Heart left ventricle (tissue), 16 donors: ENCODE measurements at regions of chr7 and their contacts with region 1.

Region 1: DNA sequence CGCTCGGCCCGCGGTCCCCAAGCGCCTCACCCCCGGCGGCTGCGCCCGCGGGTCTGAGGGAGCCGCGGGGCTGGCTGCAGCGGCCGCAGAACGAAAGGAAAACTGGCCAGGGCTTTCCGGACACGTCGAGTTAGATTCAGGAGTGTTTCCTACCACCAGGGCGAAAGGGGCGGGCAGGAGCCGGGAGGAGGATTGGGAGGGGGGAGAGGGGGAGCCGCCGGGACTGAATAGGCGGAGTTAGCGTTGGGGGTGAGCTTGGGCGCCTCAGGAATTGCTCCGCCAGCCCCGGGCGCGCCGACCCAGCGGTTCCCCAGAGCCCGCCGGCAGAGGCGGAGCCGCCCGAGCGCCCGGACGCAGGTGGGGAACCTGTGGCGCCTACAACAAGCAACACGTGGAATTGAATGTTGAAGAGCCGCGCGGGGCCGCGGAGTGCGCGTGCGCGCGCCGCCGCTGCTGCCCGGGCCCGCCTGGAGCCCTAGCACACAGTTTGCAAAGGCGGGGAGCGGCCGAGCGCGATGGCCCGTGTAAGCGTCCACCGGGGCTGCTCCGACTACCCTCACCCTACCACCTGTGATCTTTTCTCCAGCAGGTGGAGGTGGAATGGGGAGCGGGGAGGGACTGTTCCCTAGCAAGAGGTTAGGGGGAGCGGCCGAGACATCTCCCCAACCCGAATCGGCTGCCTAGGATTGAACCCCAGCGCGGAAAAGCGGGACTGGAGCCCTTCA is at the start of gene CADPS2:
- DNase-seq: peak; percentile 87 to 90 (median 88)
- ATAC-seq: peak; percentile 82 to 96 (median 94)
- H3K4me3 ChIP-seq: peak within 1 kb of the TSS; percentile 63 to 91 (median 84)
- H3K27ac ChIP-seq: peak within 1 kb of the TSS; percentile 85 to 95 (median 91)
- H3K4me1 ChIP-seq: peaks cover 0 to 27% (median 6%) of the 10 kb centered on the region in 12 donors
- H3K27me3 ChIP-seq: peaks cover 0 to 33% (median 0%) of the 10 kb centered on the region in 9 donors
- CTCF ChIP-seq: peak in 7 of 12 donors; percentile 6 to 38 (median 33)
- POLR2A ChIP-seq: peak in 1 of 2 donors; percentile 83
- total RNA-seq, gene CADPS2: 6.5 to 29.0 (median 10.3) TPM

Region 2: DNA sequence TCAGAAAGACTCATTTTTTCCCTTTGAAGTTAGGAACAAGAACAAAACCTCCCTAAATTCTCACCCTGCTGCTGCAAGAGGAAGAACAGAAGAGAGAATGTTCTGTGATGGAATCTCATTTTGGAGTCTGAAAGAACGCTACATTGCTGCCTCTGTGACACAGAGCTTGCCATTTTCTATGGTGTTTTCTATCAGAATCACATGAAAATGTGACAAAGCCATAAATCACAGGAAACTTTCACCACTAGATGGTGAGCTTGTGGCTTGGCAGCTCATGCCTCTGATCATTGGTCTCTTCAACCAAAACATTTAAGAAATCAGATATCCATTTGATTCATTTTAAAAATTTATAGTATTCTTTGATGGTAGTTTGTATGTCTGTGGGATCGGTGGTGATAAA is 83.2 kb before region 1 on chr7:
- intact Hi-C with region 1: loop called in 8 of 10 experiments (anchors 1 to 5 kb)
- DNase-seq: no peak
- ATAC-seq: peak in 2 of 4 donors; percentile 19 to 66
- H3K4me3 ChIP-seq: no peak overlapping the region
- H3K27ac ChIP-seq: peak overlapping the region in 11 of 12 donors; percentile 22 to 80 (median 72)
- H3K4me1 ChIP-seq: peaks cover 0 to 34% (median 10%) of the 10 kb centered on the region in 12 donors
- H3K27me3 ChIP-seq: no peaks in the 10 kb centered on the region
- CTCF ChIP-seq: peak; percentile 30 to 72 (median 51)
- POLR2A ChIP-seq: no peak

Region 3: DNA sequence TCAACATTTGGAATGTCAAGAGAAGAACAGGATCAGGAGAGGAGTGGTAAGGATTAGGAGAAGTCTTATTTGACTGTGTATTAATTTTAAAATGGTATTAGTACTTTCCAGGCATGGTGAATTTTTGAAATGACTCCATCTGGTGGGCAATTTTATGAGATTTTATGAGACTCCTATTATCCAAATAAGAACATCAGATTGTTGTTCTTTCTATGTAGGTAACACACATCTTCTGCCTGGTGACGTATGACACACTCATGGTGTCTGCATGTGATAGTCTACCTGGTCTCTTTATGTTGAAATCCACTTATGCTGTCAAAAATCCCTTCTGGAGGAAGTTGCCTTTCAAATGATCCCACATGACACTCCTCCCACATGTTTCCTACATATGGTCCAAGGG is 262.3 kb after region 1 on chr7:
- intact Hi-C with region 1: loop called in 6 of 10 experiments (anchors 5 to 10 kb)
- DNase-seq: no peak
- ATAC-seq: no peak
- H3K4me3 ChIP-seq: no peak overlapping the region
- H3K27ac ChIP-seq: no peak overlapping the region
- H3K4me1 ChIP-seq: no peaks in the 10 kb centered on the region
- H3K27me3 ChIP-seq: no peaks in the 10 kb centered on the region
- CTCF ChIP-seq: peak in 2 of 12 donors; percentile 9 to 15
- POLR2A ChIP-seq: no peak